Naive thymus-derived CD8-positive, alpha-beta T cell (primary cell): ENCODE measurements at regions of chr13 and their contacts with region 1.

Region 1: DNA sequence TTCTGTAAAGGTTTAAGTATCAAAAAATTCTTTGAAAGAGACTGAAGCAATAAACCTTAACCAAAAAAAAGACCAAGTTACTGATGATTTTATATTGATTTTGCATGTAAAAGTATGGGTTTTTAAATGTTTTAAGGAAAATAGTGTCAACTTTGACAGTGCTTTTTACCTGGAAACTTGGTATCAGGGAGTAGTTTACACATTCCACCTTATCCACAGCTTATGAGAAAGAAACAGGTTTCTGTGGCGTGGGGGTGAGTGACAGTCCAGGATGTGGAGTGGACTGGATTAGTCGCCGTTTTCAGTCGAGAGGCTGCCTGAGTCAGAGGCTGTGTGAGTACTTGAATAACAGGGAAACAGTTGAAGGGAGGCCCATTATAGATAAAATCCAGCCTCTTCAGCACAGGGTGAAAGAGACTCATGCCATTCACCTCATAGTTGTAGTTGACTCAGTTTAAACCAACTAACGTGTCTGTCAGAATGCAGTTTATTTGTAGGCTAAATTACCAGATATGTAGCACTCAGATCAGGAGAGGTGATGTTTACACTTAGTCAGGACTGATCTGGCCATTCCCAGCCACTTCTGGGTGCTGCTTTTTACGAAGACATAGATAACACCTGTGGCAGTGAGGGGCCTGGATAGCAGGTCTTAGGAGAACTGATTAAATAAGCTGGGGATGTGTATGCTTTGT is 595 bp upstream of the GPR183 start:
- DNase-seq: no peak
- ATAC-seq: peak; percentile 18 to 34
- H3K4me3 Mint-ChIP-seq: peak overlapping the region; percentile 68 to 96 (median 82)
- H3K27ac Mint-ChIP-seq: peak overlapping the region; percentile 75 to 94 (median 87)
- H3K4me1 Mint-ChIP-seq: peaks cover 32 to 90% (median 87%) of the 10 kb centered on the region in 4 donors
- H3K27me3 Mint-ChIP-seq: no peaks in the 10 kb centered on the region

Region 2: DNA sequence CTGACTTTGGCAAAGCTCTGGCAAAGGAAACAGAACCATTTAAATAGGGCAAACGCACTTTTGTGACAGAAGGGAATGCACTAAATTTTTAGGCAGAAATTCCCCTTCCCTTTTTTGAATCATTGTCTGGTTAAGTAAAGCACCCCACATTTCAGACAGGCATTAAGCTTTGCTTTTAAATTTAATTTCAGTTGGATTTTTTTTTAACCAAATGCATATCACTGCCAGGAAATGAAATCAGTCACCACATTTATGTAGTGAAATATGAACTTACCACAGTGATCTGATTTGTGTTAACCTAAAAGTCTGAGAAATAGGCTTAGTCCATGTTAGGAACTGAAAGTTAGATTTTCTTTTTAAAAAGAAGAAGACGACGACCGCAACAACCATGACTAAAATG is 11.4 kb before region 1 on chr13:
- POLR2A ChIA-PET with region 1: interaction called, 12 read pairs
- DNase-seq: peak in 3 of 10 donors; percentile 40 to 57 (median 57)
- ATAC-seq: peak; percentile 81 to 83
- H3K4me3 Mint-ChIP-seq: peak overlapping the region; percentile 42 to 89 (median 82)
- H3K27ac Mint-ChIP-seq: peak overlapping the region; percentile 81 to 97 (median 94)
- H3K4me1 Mint-ChIP-seq: peaks cover 37 to 92% (median 71%) of the 10 kb centered on the region in 4 donors
- H3K27me3 Mint-ChIP-seq: no peaks in the 10 kb centered on the region